CD4-positive, alpha-beta memory T cell (primary cell): ENCODE measurements at regions of chr19 and their contacts with region 1.

Region 1: DNA sequence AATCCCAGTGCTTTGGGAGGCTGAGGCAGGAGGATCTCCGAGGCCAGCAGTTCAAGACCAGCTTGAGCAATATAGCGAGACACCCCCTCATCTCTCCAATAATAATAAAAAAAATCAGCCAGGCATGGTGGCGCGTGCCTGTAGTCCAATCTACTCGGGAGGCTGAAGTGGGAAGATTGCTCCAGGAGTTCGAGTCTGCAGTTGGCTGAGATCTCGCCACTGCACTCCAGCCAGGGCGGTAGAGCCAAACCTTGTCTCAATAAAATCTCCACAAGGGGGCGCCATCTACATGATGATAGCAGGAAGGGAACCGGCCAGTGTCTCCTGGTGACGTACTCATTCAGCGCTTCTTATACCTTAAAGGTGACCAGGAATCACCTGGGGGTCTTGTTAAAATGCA is 13.6 kb upstream of the C5AR1 start:
- DNase-seq: peak; percentile 75 to 80 (median 77)
- H3K4me3 ChIP-seq: no peak overlapping the region
- H3K4me3 Mint-ChIP-seq: no peak overlapping the region
- H3K27ac ChIP-seq: no peak overlapping the region
- H3K27ac Mint-ChIP-seq: no peak overlapping the region
- H3K4me1 ChIP-seq: peaks cover 5% of the 10 kb centered on the region
- H3K4me1 Mint-ChIP-seq: peaks cover 2 to 9% (median 4%) of the 10 kb centered on the region in 4 donors
- H3K27me3 ChIP-seq: no peaks in the 10 kb centered on the region
- H3K27me3 Mint-ChIP-seq: no peaks in the 10 kb centered on the region

Region 2: GRCh38 chr19:47284324-47284899 is 11.6 kb before region 1 on chr19:
- CTCF ChIA-PET with region 1: interaction called, 10 read pairs
- POLR2A ChIA-PET with region 1: no interaction called
- intact Hi-C with region 1: no loop called
- DNase-seq: peak in 4 of 5 donors; percentile 54 to 69 (median 64)
- H3K4me3 ChIP-seq: no peak overlapping the region
- H3K4me3 Mint-ChIP-seq: no peak overlapping the region
- H3K27ac ChIP-seq: no peak overlapping the region
- H3K27ac Mint-ChIP-seq: no peak overlapping the region
- H3K4me1 ChIP-seq: peaks cover 10% of the 10 kb centered on the region
- H3K4me1 Mint-ChIP-seq: peaks cover 7 to 16% (median 12%) of the 10 kb centered on the region in 4 donors
- H3K27me3 ChIP-seq: no peaks in the 10 kb centered on the region
- H3K27me3 Mint-ChIP-seq: no peaks in the 10 kb centered on the region

Region 3: DNA sequence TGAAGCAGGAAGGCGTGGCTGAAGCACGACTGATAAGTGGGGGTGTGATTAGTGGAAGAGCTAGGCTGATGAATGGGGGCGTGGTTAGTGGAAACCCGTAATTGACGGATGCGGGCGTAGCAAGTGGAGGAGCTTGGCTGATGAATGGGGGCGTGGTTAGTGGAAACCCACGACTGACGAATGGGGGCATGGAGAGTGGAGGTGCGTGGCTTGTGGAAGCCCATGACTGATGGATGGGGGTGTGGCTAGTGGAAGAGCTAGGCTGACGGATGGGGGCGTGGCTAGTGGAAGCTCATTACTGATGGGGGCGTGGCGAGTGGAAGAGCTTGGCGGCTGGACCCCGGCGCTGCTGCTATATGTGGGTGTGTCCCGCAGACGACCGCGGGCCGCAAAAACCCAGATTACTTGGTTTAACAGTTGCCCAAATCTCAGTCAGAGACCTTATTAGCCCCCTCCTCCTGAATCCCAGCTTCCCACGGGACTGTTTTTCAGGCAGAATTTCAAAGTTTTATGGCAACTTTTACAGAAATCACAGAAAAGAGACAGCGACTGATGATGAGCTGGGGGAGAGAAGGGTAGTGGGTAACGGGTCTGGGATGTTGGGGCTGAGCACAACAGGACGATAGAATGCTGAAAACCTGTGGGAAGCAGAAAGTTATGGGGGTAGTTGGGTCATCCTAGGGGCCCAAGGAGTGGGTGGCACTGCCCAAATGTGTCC is 132.3 kb after region 1 on chr19:
- CTCF ChIA-PET with region 1: interaction called, 8 read pairs
- POLR2A ChIA-PET with region 1: no interaction called
- intact Hi-C with region 1: loop called (anchors 1 kb)
- DNase-seq: peak; percentile 73 to 96 (median 80)
- H3K4me3 ChIP-seq: peak overlapping the region; percentile 21 to 27
- H3K4me3 Mint-ChIP-seq: no peak overlapping the region
- H3K27ac ChIP-seq: no peak overlapping the region
- H3K27ac Mint-ChIP-seq: no peak overlapping the region
- H3K4me1 ChIP-seq: peaks cover 26% of the 10 kb centered on the region
- H3K4me1 Mint-ChIP-seq: peaks cover 6 to 12% (median 12%) of the 10 kb centered on the region in 4 donors
- H3K27me3 ChIP-seq: peaks cover 24% of the 10 kb centered on the region
- H3K27me3 Mint-ChIP-seq: peaks cover 32 to 33% of the 10 kb centered on the region in 2 donors